Head of caudate nucleus (tissue), 42 donors: ENCODE measurements at regions of chr11 and their contacts with region 1.

Region 1: GRCh38 chr11:20397281-20397680 is 9.8 kb downstream of the PRMT3 start:
- DNase-seq: peak in 16 of 42 donors; percentile 18 to 70 (median 32)

Region 2: GRCh38 chr11:20609727-20610707 is 212.7 kb after region 1 on chr11:
- intact Hi-C with region 1: loop called (anchors 5 kb)
- DNase-seq: peak; percentile 72 to 92 (median 86)